ENCODE measurements at regions of chr7 and their contacts with region 1.

Region 1: GRCh38 chr7:100088621-100089457 is at the start of gene COPS6:
- DNase-seq: peak; percentile 92
- ATAC-seq: peak; percentile 88
- total RNA-seq, gene COPS6: 76.2 TPM

Region 2: GRCh38 chr7:101608823-101609703 is 1520.2 kb after region 1 on chr7:
- intact Hi-C with region 1: loop called (anchors 5 kb)
- DNase-seq: no peak
- ATAC-seq: no peak

Measured in sciatic nerve (tissue), 2 donors.